Activated T-helper 1 cell treated with anti-CD3 and anti-CD28 coated beads, Interleukin-12 subunit alpha, Interleukin-12 subunit beta, Interleukin-2, Interleukin-4 antibody, amounts not matched to agents 30 ng/mL and 10 ng/mL and 1 ng/mL, durations not matched to agents 14 hours and 24 hours and 36 hours (primary cell): ENCODE measurements at regions of chr9 and their contacts with region 1.

Region 1: DNA sequence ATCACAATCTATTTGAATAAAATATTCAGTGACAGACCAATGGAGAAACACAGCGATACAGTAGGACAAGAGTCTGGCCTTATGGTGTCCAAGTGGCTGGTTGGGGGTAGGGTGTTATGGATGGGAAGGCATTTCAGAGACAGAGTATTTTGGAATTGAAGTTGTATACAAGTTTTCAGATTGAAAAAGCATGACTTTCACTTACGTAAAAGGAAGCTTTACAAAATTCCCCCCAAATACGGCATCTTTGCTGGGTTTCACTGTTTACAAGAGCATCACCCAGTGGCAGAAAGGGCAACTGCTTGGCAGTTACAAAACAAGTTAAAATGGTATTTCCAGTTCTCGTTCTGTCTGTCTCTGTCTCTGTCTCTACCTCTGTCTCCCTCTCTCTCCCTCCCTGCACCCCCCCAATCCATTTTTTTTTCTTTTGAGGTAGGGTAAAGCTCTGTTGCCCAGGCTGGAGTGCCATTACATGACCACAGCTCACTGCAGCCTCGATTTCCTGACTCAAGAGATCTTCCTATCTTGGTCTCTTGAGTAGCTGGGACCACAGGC is 86.2 kb downstream of the PTPN3 start:
- DNase-seq: no peak
- H3K4me3 Mint-ChIP-seq: peak overlapping the region; percentile 32
- H3K27ac Mint-ChIP-seq: peak overlapping the region; percentile 92
- H3K4me1 Mint-ChIP-seq: peaks cover 73% of the 10 kb centered on the region
- H3K27me3 Mint-ChIP-seq: no peaks in the 10 kb centered on the region

Region 2: GRCh38 chr9:108885643-108886348 is 526.1 kb before region 1 on chr9:
- intact Hi-C with region 1: loop called (anchors 5 kb)
- DNase-seq: no peak
- H3K4me3 Mint-ChIP-seq: peak overlapping the region; percentile 8
- H3K27ac Mint-ChIP-seq: peak overlapping the region; percentile 80
- H3K4me1 Mint-ChIP-seq: peaks cover 16% of the 10 kb centered on the region
- H3K27me3 Mint-ChIP-seq: no peaks in the 10 kb centered on the region

Region 3: GRCh38 chr9:109110326-109111021 is 301.4 kb before region 1 on chr9:
- intact Hi-C with region 1: loop called (anchors 2 kb)
- DNase-seq: no peak
- H3K4me3 Mint-ChIP-seq: peak overlapping the region; percentile 51
- H3K27ac Mint-ChIP-seq: peak overlapping the region; percentile 85
- H3K4me1 Mint-ChIP-seq: peaks cover 74% of the 10 kb centered on the region
- H3K27me3 Mint-ChIP-seq: no peaks in the 10 kb centered on the region

Region 4: GRCh38 chr9:109297899-109298298 is 114.0 kb before region 1 on chr9:
- intact Hi-C with region 1: loop called (anchors 5 kb)
- DNase-seq: no peak
- H3K4me3 Mint-ChIP-seq: no peak overlapping the region
- H3K27ac Mint-ChIP-seq: no peak overlapping the region
- H3K4me1 Mint-ChIP-seq: peaks cover 15% of the 10 kb centered on the region
- H3K27me3 Mint-ChIP-seq: peaks cover 15% of the 10 kb centered on the region

Region 5: GRCh38 chr9:109401168-109401989 is 10.5 kb before region 1 on chr9:
- intact Hi-C with region 1: loop called (anchors 1 kb)
- DNase-seq: no peak
- H3K4me3 Mint-ChIP-seq: peak overlapping the region; percentile 19
- H3K27ac Mint-ChIP-seq: peak overlapping the region; percentile 74
- H3K4me1 Mint-ChIP-seq: peaks cover 45% of the 10 kb centered on the region
- H3K27me3 Mint-ChIP-seq: peaks cover 8% of the 10 kb centered on the region

Region 6: DNA sequence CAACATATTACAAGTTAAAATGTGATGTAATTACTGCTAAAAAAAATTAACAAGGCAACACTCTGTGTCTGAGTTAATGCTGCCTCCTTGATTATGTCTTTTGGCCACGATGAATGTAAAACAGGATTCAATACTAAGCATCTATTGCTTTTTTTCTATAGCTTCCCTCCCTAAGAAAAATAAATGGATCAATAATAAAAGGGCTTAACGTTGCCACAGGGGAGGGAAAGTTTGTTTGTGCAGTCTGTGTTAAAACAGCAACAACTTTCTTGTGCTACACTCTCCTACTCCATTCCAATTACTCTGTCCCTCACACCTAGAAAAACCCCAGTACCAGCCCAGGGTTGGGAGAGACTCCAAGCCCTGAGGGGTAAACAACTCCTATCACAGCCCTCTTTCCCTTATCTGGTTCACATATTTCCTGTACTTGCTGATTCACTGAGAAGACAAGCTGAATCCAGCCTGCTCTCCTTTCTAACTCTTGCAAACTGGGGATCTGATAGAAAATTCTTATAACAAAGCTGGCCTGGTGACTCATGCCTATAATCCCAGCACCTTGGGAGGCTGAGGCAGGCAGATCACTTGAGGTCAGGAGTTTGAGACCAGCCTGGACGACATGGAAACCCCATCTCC is 41.5 kb after region 1 on chr9:
- intact Hi-C with region 1: no loop called
- DNase-seq: no peak
- H3K4me3 Mint-ChIP-seq: no peak overlapping the region
- H3K27ac Mint-ChIP-seq: no peak overlapping the region
- H3K4me1 Mint-ChIP-seq: peaks cover 24% of the 10 kb centered on the region
- H3K27me3 Mint-ChIP-seq: peaks cover 13% of the 10 kb centered on the region

Region 7: DNA sequence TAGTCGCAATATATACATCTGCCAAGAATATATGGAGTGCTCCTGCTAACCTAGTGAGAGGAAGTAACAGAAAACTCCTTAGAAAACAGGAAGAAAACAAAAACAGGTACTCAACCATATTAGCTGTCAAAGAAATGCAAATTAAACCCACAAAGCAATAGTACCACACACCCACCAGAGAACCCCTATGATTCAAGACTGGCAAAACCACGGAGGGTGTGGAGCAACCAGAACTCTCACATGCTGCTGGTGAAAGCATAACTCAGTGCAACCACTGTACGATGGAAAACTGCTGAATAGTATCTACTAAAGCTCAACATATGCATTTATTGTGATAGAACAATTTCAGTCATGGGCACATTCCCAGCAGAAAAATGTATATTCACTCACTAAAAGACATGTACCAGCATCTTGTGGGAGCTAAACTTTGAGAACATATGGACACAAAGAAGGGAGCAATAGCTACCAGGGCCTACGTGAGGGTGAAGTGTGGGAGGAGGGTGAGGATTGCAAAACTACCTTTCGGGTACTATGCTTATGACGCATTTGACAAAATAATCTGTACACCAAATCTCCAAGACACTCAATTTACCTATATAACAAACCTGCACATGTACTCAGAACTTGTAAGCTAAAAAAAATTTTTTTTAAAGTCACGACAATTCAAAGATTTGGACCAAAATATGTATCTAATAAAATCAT is 52.2 kb after region 1 on chr9:
- intact Hi-C with region 1: loop called (anchors 1 kb)
- DNase-seq: peak; percentile 29
- H3K4me3 Mint-ChIP-seq: no peak overlapping the region
- H3K27ac Mint-ChIP-seq: peak overlapping the region; percentile 88
- H3K4me1 Mint-ChIP-seq: peaks cover 71% of the 10 kb centered on the region
- H3K27me3 Mint-ChIP-seq: peaks cover 1% of the 10 kb centered on the region